Lower leg skin (tissue), 4 donors: ENCODE measurements at regions of chr16 and their contacts with region 1.

Region 1: DNA sequence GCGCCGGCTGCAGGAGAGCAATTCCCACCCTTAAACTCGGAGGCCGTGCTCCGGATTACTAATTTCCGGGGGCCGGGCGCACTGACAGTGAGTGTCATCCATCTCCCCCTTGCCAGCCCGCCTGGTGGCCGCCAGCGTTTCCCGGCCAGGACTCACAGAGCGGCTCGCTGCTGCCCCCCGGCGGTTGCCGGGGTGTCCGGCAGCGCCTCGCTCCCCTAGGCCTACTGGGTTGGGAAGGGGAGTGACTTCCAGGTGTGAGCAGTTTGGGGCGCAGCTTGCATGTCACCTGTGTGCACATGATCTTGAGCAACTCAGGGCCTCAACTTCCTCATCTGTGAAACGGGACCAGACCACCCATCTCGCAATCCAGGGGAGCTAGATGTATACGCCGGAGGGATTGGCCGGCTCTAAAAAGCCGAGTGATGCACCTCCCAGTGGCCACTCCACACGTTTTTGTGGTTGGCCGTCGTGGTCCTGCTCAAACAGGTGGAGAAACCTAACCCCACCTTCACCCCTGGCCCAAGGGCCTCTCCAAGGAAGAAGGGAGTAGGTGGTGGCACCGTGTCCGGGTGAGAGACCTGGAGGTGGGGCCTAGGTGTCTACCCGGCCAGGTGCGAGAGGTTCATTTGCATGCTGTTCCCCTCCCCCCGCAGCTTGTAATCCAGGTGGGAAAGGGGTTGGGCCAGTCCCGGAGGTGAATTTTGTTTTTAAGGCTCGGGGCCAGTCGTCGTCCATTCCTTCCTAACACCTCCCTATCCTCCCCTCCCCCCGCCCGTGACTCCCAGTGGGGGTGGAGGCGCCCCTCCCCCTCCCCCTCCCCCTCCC is 2.4 kb upstream of the GSE1 start:
- DNase-seq: peak; percentile 87 to 98
- H3K4me3 ChIP-seq: no peak overlapping the region
- CTCF ChIP-seq: peak in 1 of 3 donors; percentile 95
- POLR2A ChIP-seq: no peak

Region 2: DNA sequence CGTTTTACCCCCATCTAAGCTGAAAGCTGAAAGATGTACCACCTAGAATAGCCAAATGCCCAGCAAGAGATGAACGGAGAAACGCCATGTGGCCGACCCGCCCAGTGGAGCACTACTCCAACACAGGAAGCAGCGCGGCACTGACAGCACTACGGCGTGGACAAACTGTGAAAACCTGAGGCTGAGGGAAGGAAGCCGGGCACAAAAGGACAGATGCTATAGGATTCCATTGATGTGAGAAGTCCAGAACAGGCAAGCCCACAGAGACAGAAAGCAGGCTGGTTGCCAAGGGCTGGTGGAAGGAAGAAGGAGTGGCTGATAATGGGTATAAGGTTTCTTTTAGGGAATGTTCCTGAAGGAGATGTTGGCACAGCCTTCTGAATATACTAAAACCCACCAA is 1538.7 kb before region 1 on chr16:
- intact Hi-C with region 1: no loop called
- DNase-seq: no peak
- H3K4me3 ChIP-seq: no peak overlapping the region
- CTCF ChIP-seq: no peak
- POLR2A ChIP-seq: no peak

Region 3: DNA sequence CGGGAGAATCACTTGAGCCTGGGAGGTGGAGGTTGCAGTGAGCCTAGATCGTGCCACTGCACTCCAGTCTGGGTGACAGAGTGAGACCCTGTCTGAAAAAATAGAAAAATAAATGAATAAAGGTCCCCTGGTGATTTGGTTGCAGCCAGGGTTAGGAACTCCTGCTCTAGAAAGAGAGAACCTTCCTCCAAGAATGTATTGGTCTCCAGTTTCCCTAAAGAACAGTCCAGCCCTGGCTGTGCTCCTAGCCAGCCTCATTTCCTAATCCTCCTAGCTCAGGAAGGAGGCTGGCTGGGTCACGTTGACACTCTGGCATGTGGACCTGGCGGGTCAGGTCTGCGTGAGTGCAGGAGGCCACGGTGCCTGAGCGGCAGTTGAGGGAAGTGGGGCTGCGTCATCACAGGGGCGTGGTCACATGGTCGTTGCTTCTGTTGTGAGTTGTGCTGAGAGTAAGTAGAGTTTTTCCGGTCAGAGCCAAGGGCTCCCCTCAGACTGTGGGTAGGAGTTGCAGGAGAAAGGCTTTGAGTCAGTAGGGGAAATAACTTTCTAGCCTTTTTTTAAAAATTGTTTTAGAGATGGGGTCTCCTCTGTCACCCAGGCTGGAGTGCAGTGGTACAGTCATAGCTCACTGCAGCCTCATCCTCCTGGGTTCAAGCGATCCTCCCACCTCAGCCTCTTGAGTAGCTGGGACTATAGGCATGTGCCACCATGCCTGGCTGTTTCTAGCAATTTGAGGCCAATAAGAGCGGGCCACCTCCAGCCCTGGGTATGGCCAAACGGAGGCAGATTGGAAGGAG is 304.5 kb before region 1 on chr16:
- intact Hi-C with region 1: loop called (anchors 10 kb)
- DNase-seq: peak; percentile 88 to 97
- H3K4me3 ChIP-seq: no peak overlapping the region
- CTCF ChIP-seq: no peak
- POLR2A ChIP-seq: no peak

Region 4: DNA sequence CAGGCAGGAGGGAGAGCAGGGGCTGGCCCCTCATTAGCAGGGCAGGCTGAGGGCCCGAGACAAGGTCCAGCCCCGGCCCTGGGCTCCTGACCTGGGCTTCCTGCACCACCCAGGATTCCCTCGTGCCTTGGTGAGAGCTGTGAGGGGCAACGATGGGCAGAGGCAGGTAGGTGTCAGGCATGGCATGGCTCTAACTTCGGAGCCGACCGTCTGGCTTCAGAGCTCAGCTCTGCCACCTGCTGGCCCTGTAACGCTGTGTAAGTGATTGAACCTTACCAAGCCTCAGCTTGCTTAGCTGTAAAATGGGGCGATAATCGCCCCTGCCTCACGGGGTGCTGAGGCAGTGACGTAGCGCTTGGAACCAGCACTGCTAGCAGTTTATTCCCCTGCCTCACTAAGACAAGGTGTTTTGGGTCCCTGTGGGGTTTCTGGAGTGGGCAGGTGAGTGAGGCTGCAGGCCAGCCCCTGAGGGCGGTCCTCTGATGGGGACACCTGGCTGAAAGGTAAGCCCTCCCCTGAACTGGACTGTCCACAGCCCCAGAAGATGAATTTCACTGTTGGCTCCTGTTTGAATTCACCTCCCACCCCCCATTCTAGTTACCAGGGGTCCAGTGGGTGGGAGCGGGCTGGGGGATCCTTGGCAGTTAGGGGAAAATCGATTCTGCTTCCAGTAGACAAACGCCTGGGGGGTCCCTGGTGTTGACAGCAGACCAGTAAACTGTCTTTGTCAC is 182.4 kb before region 1 on chr16:
- intact Hi-C with region 1: loop called (anchors 5 kb)
- DNase-seq: peak in 1 of 2 donors; percentile 76
- H3K4me3 ChIP-seq: no peak overlapping the region
- CTCF ChIP-seq: no peak
- POLR2A ChIP-seq: no peak

Region 5: DNA sequence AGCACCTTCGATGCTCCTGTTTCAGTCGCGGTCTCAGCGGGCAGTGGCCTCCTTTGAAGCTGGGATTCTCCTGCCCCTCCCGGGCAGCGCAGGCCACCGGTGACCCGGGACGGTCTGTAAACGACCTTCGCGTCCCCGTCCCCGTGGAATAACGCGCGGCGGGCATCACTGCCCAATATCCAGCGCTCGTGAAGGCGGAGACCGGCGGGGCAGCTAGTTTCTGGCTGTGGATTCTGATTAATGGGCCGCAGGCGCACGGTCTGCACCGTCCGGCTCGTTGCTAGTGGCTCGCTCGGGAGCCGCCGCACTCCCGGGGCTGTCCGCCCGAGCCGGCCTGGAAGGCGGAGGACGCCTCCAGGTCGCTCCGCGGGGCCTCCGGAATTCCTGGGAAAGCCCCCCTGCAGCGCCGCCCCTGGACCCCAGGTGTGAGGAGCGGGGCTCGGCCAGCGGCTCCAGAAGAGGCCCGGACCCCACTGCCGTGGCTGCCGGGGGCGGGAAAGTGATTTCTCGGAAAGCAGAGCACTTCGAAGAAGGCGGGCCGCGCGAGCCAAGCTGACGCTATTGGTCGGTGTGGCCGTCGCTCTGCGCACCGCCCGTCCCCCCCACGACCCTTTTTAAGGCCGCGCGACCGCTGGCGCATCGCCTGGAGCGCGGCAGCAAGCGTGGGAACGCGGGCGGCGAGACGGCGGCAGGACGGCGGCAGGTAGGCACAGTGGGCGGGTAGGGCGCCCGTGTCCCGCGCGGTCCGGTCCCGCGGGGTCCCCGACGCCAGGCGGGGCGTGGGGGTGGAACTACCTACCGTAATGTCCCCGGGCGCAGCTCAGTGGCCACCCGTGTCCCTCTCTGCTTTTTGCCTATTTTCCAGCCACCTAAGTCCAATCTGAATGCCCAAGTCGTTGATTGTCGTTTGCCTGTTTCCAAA is 288.1 kb after region 1 on chr16 and contains the start of gene IRF8:
- intact Hi-C with region 1: no loop called
- DNase-seq: peak in 1 of 2 donors; percentile 88
- H3K4me3 ChIP-seq: peak within 1 kb of the TSS; percentile 13
- CTCF ChIP-seq: no peak
- POLR2A ChIP-seq: no peak
- total RNA-seq, gene IRF8: 1.5 to 5.7 (median 3.7) TPM